Psoas muscle (tissue), 8 donors: ENCODE measurements at regions of chr5 and their contacts with region 1.

Region 1: DNA sequence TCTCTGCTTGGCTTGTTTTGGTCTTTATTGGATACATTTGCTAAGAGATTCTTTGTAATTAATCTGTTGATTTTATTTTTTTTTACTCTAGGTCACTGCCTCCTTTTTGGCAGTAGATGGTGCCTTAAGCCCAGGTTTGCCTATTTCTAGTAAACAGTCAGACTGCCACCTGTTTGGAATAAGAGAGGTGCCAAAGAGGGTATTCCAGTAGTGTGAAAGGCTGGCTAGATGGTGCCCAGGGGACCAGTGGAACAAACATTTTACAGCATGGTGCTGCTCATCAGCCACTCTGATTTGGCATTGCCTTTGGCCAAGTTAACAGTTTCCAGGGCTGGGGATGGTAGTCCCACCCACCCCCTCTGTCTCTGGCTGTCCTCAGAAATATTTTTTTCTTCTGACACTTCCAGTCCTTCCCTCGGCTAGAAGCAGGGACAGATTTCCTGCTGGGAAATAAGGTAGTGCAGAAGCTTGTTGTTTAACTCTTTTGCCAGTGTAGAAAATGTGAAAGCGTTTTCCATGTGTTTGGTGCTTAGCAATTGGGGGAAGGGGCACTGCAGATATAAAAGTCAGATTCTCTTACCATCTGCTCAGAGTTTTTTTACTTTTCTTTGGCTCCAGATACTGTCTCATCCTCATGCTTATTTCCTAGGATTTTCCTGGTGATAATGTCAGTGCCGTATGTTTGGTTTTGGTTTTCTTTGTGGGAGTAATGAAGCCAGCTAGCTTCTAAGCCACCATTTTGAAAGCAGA is 36.6 kb upstream of the FBXL7 start:
- DNase-seq: no peak
- ATAC-seq: no peak
- H3K4me3 ChIP-seq: no peak overlapping the region
- H3K27ac ChIP-seq: no peak overlapping the region
- H3K4me1 ChIP-seq: no peaks in the 10 kb centered on the region
- H3K27me3 ChIP-seq: no peaks in the 10 kb centered on the region
- CTCF ChIP-seq: peak; percentile 27

Region 2: DNA sequence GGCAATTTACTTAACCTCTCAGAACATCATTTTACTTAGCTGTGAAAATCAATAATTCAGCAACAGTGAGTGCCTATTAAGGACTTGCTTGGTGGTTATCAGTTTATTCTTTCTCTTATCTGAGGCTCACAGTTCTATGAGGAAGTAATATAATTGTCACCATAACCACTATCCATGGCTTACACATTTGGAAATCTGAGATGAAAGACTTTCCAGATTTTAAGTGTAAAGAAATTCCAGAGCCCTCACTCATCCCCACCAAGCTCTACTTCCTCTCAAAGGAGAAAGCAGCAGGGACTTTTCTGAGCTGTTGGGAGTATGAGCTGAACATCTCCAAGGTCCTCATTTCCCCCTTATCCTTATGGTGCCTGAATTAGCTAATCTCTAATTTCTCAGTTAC is 358.1 kb after region 1 on chr5:
- intact Hi-C with region 1: loop called in 1 of 2 experiments (anchors 10 kb)
- DNase-seq: no peak
- ATAC-seq: no peak
- H3K4me3 ChIP-seq: no peak overlapping the region
- H3K27ac ChIP-seq: no peak overlapping the region
- H3K4me1 ChIP-seq: no peaks in the 10 kb centered on the region
- H3K27me3 ChIP-seq: no peaks in the 10 kb centered on the region
- CTCF ChIP-seq: no peak